ENCODE measurements at regions of chr20 and their contacts with region 1.

Region 1: DNA sequence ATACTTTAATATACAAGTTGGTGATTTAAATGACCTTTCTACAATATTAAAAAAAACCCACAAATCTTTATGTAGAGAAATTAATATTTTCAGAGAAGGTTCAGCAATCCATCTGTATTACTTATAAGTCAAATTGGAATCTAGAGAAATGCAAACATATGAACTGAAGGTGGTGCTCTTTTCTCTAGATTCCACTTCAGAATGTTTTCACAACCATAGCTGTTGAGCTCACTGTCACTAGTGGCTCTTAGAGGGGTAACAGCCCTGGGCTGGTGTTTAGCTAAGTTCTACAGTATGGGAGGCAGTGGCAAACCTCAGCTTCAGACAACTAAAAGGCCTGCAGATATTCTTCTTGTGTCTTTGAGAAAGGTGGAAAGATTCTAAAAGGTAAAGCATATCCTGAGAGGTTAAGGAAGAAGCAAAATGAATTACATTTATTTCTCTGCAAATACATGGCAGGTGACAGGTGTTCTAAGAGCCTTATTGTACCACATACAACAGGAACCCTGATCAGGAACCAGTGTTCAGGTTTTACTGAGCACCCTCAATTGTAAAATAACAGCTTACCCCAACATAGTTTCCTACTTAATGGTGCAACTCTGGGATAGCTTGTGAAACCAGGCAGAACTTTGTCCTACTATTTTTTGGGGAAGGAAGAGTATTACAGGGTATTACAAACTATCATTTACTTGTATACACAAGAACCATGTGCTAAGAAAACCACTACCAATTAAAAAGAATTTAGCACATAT is 56.6 kb upstream of the SAMHD1 start:
- DNase-seq: peak; percentile 22 to 80
- ATAC-seq: peak; percentile 97 to 99 (median 99)
- H3K4me3 ChIP-seq: no peak overlapping the region
- H3K4me3 Mint-ChIP-seq: no peak overlapping the region
- H3K27ac ChIP-seq: peak overlapping the region; percentile 40
- H3K27ac Mint-ChIP-seq: peak overlapping the region; percentile 82 to 83
- H3K4me1 ChIP-seq: peaks cover 11% of the 10 kb centered on the region
- H3K4me1 Mint-ChIP-seq: peaks cover 8 to 9% of the 10 kb centered on the region in 2 donors
- H3K27me3 ChIP-seq: no peaks in the 10 kb centered on the region
- H3K27me3 Mint-ChIP-seq: no peaks in the 10 kb centered on the region
- CTCF ChIP-seq: peak; percentile 63

Region 2: DNA sequence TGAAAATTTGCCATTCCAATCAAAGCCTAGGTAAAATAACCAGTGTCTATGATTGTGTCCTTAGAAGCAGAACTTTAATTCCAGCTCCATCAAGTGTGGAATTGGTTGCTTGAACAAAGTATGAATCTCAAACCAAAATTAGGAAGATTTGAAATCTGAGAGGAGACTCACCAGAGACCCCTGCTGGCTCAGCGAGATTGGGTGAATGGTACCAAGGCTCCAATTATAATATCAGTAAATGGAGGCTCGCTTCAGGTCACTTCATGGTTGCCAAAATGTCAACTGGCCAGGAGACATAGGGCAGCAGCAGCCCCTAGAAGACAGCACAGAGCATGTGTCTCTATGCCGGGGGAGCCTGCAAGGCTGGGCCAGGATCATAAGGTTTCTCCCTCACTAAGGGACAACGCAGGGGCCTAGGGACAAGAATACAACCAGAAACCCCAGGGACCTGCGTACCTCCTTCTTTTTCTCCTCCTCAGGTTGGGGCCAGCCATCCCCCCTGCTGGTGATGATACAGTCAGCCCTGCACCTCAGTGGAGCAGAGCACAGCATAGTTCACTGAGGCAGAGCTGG is 73.7 kb after region 1 on chr20:
- intact Hi-C with region 1: loop called (anchors 1 kb)
- DNase-seq: peak; percentile 33 to 71
- ATAC-seq: peak; percentile 48 to 70 (median 60)
- H3K4me3 ChIP-seq: no peak overlapping the region
- H3K4me3 Mint-ChIP-seq: no peak overlapping the region
- H3K27ac ChIP-seq: no peak overlapping the region
- H3K27ac Mint-ChIP-seq: peak overlapping the region; percentile 64 to 66
- H3K4me1 ChIP-seq: peaks cover 7% of the 10 kb centered on the region
- H3K4me1 Mint-ChIP-seq: peaks cover 14% of the 10 kb centered on the region in 2 donors
- H3K27me3 ChIP-seq: no peaks in the 10 kb centered on the region
- H3K27me3 Mint-ChIP-seq: no peaks in the 10 kb centered on the region
- CTCF ChIP-seq: peak; percentile 57

Region 3: GRCh38 chr20:37095599-37096414 is 87.7 kb after region 1 on chr20 and contains the start of gene RBL1:
- intact Hi-C with region 1: loop called (anchors 5 kb)
- DNase-seq: peak; percentile 79 to 92
- ATAC-seq: peak; percentile 90 to 93 (median 90)
- H3K4me3 ChIP-seq: peak within 1 kb of the TSS; percentile 74
- H3K4me3 Mint-ChIP-seq: peak within 1 kb of the TSS; percentile 99
- H3K27ac ChIP-seq: peak within 1 kb of the TSS; percentile 80
- H3K27ac Mint-ChIP-seq: peak within 1 kb of the TSS; percentile 96 to 98
- H3K4me1 ChIP-seq: peaks cover 21% of the 10 kb centered on the region
- H3K4me1 Mint-ChIP-seq: peaks cover 15 to 22% of the 10 kb centered on the region in 2 donors
- H3K27me3 ChIP-seq: no peaks in the 10 kb centered on the region
- H3K27me3 Mint-ChIP-seq: no peaks in the 10 kb centered on the region
- CTCF ChIP-seq: no peak
- total RNA-seq, gene RBL1: 21.0 to 28.4 (median 22.2) TPM